CD4-positive, alpha-beta T cell (primary cell): ENCODE measurements at regions of chr16 and their contacts with region 1.

Region 1: DNA sequence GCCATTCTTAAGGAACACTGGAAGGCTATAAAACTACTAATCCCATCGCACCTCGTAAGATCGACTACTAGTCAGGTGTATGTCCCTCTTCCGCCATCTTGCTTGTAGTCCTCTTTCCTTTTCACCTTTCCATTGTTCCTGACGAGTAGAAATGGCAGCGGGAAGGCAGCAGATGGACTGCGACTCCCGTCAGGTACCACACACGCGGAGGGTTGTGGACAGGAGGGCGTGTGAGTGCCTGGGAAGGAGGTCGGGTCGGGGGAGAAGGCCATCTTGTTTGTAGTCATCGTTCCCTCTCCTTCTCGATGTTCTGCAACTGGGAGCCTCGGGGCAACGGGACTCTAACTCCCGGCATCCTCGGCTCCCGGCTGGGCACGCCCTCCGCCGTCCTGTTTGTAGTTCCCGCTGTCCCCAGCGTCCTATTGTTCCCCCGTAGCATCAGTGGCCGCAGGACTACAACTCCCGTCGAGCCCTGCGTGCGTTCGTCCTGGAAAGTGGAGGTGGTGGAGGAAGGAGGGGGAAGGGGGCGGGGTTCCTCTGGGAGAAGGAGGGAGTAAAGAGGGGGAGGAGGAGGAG is 324 bp upstream of the FBXL19 start:
- DNase-seq: peak; percentile 87 to 99 (median 93)
- ATAC-seq: peak; percentile 66
- H3K4me3 ChIP-seq: peak overlapping the region; percentile 93
- H3K4me3 Mint-ChIP-seq: peak overlapping the region; percentile 99
- H3K27ac ChIP-seq: peak overlapping the region; percentile 85 to 98
- H3K27ac Mint-ChIP-seq: peak overlapping the region; percentile 92
- H3K4me1 ChIP-seq: peaks cover 27% of the 10 kb centered on the region
- H3K4me1 Mint-ChIP-seq: peaks cover 19% of the 10 kb centered on the region
- H3K27me3 ChIP-seq: no peaks in the 10 kb centered on the region
- H3K27me3 Mint-ChIP-seq: no peaks in the 10 kb centered on the region
- CTCF ChIP-seq: no peak

Region 2: GRCh38 chr16:30650369-30651123 is 272.5 kb before region 1 on chr16 and contains the start of gene PRR14:
- CTCF ChIA-PET with region 1: no interaction called
- POLR2A ChIA-PET with region 1: no interaction called
- intact Hi-C with region 1: loop called in 1 of 2 experiments (anchors 2 kb)
- DNase-seq: peak; percentile 96 to 99 (median 98)
- ATAC-seq: peak; percentile 89
- H3K4me3 ChIP-seq: peak within 1 kb of the TSS; percentile 86
- H3K4me3 Mint-ChIP-seq: peak within 1 kb of the TSS; percentile 99
- H3K27ac ChIP-seq: peak within 1 kb of the TSS; percentile 84 to 96
- H3K27ac Mint-ChIP-seq: peak within 1 kb of the TSS; percentile 95
- H3K4me1 ChIP-seq: peaks cover 30% of the 10 kb centered on the region
- H3K4me1 Mint-ChIP-seq: peaks cover 22% of the 10 kb centered on the region
- H3K27me3 ChIP-seq: no peaks in the 10 kb centered on the region
- H3K27me3 Mint-ChIP-seq: no peaks in the 10 kb centered on the region
- CTCF ChIP-seq: no peak
- total RNA-seq, gene PRR14: 50.2 to 51.7 TPM

Region 3: DNA sequence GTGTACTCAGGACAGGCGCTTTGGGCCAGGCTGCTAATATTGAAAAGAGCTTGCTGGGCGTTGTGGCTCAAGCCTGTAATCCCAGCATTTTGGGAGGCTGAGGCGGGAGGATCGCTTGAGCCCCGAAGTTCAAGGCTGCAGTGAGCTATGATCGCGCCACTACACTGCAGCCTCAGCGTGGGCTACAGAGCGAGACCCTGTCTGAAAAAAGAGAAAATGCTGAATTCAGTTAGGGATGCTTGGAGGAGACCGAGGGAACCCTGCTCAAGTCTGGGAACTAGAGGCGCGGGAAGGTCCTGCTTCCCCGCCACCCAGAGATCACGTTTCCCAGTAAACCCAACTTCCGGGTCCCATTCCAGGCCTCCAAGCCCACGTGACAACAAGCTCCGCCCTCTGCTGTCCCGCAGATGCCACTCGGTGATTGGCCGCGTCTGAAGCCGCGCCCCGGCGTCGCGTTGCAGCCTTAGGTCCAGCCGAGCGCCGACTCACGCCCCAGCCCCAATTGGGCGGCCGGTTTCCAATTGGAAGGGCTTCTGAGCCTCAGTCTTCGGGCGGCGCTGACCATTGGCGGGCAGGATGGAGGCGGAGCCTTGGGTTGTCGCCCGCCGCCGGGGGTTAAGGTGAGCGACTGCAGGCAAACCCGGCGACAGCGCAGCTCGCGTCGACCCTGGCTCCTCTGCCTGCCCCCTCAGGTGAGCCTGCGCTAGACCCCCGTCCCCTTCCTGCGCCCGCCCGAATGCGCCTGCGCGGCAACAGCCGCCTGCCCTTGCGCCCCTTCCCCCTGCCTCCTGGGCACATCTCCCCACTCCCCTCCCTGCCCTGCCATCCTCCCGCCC is 175.0 kb before region 1 on chr16 and contains the start of gene PHKG2:
- CTCF ChIA-PET with region 1: no interaction called
- POLR2A ChIA-PET with region 1: no interaction called
- intact Hi-C with region 1: loop called in 1 of 2 experiments (anchors 5 kb)
- DNase-seq: peak; percentile 88 to 99 (median 94)
- ATAC-seq: peak; percentile 94
- H3K4me3 ChIP-seq: peak within 1 kb of the TSS; percentile 72
- H3K4me3 Mint-ChIP-seq: peak within 1 kb of the TSS; percentile 87
- H3K27ac ChIP-seq: peak within 1 kb of the TSS; percentile 8 to 68
- H3K27ac Mint-ChIP-seq: peak within 1 kb of the TSS; percentile 68
- H3K4me1 ChIP-seq: peaks cover 19% of the 10 kb centered on the region
- H3K4me1 Mint-ChIP-seq: peaks cover 30% of the 10 kb centered on the region
- H3K27me3 ChIP-seq: no peaks in the 10 kb centered on the region
- H3K27me3 Mint-ChIP-seq: no peaks in the 10 kb centered on the region
- CTCF ChIP-seq: no peak
- total RNA-seq, gene PHKG2: 24.8 to 25.2 TPM

Region 4: GRCh38 chr16:30874821-30875717 is 48.0 kb before region 1 on chr16:
- CTCF ChIA-PET with region 1: no interaction called
- POLR2A ChIA-PET with region 1: interaction called, 7 read pairs
- intact Hi-C with region 1: loop called in 1 of 2 experiments (anchors 1 kb)
- DNase-seq: peak; percentile 73 to 94 (median 88)
- ATAC-seq: peak; percentile 80
- H3K4me3 ChIP-seq: peak overlapping the region; percentile 98
- H3K4me3 Mint-ChIP-seq: peak overlapping the region; percentile 96
- H3K27ac ChIP-seq: peak overlapping the region; percentile 88 to 93
- H3K27ac Mint-ChIP-seq: peak overlapping the region; percentile 98
- H3K4me1 ChIP-seq: peaks cover 37% of the 10 kb centered on the region
- H3K4me1 Mint-ChIP-seq: peaks cover 30% of the 10 kb centered on the region
- H3K27me3 ChIP-seq: no peaks in the 10 kb centered on the region
- H3K27me3 Mint-ChIP-seq: no peaks in the 10 kb centered on the region
- CTCF ChIP-seq: no peak

Region 5: DNA sequence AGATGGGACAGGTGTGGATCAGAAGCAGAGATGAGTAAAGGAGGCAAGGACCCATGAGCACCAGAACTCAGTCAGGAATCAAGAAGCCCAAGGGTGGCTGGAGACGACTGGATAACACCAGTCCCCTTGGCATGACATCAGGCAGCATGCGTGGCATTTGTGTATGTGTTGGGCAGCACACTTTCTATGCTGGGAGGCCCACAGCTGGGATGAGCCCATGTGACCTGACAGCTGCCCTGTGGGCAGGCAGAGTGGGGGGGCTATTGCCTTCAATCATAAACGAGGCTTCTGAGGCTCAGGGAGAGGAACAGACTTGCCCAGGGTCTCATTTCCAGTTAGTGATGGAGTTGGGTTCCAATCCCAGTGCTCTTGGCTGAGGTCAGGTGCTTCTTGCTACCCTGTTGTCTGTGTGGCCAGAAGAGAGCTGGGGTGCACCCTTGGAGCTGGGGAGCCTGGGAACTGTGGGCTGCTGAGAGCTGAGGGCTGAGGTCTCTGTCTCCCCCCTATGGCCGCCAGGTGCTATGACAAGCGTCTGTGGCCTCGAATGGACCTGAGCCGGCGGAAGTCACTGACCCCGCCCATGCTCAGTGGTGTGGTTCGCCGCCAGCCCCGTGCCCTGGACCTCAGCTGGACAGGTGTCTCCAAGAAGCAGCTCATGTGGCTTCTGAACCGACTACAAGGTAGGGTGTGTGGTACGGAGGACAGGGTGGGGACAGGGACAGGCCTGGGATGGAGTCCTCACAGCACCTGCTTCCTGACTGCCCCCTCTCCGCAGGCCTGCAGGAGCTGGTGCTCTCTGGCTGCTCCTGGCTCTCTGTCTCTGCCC is 18.8 kb after region 1 on chr16:
- CTCF ChIA-PET with region 1: interaction called, 10 read pairs
- POLR2A ChIA-PET with region 1: no interaction called
- intact Hi-C with region 1: no loop called
- DNase-seq: peak; percentile 34 to 85 (median 50)
- ATAC-seq: peak; percentile 95
- H3K4me3 ChIP-seq: no peak overlapping the region
- H3K4me3 Mint-ChIP-seq: no peak overlapping the region
- H3K27ac ChIP-seq: peak overlapping the region in 1 of 2 donors; percentile 52
- H3K27ac Mint-ChIP-seq: no peak overlapping the region
- H3K4me1 ChIP-seq: peaks cover 13% of the 10 kb centered on the region
- H3K4me1 Mint-ChIP-seq: peaks cover 19% of the 10 kb centered on the region
- H3K27me3 ChIP-seq: no peaks in the 10 kb centered on the region
- H3K27me3 Mint-ChIP-seq: no peaks in the 10 kb centered on the region
- CTCF ChIP-seq: peak; percentile 87

Region 6: DNA sequence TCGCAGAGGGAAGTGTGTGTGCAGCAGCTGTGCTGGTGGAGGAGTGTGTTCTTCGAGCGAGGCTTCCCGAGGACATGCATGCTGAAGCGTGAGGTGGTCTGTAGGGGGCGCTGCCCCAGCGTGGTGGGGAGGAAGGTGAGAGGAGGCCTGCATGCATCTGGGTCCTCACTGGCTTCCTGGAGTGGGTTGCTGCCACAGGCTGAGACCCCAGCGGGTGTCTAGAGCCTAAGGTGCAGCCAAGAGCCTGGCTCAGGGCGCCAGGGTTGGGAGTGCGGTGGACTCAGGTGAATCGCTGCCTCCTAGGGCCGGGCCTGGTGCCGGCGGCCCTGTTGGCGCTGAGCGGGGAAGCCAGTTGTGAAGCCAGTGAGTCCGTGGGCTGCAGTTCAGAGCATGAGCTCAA is 54.5 kb after region 1 on chr16:
- CTCF ChIA-PET with region 1: no interaction called
- POLR2A ChIA-PET with region 1: no interaction called
- intact Hi-C with region 1: no loop called
- DNase-seq: peak in 2 of 14 experiments; percentile 40 to 54
- ATAC-seq: peak; percentile 55
- H3K4me3 ChIP-seq: no peak overlapping the region
- H3K4me3 Mint-ChIP-seq: no peak overlapping the region
- H3K27ac ChIP-seq: no peak overlapping the region
- H3K27ac Mint-ChIP-seq: no peak overlapping the region
- H3K4me1 ChIP-seq: no peaks in the 10 kb centered on the region
- H3K4me1 Mint-ChIP-seq: no peaks in the 10 kb centered on the region
- H3K27me3 ChIP-seq: no peaks in the 10 kb centered on the region
- H3K27me3 Mint-ChIP-seq: no peaks in the 10 kb centered on the region
- CTCF ChIP-seq: no peak

Region 7: GRCh38 chr16:31073968-31074813 is 151.1 kb after region 1 on chr16 and contains the starts of genes ZNF646 and ZNF668:
- CTCF ChIA-PET with region 1: no interaction called
- POLR2A ChIA-PET with region 1: interaction called, 3 read pairs
- intact Hi-C with region 1: loop called (anchors 1 to 10 kb)
- DNase-seq: peak; percentile 94 to 100 (median 97)
- ATAC-seq: peak; percentile 81
- H3K4me3 ChIP-seq: peak within 1 kb of the TSS; percentile 96
- H3K4me3 Mint-ChIP-seq: peak within 1 kb of the TSS; percentile 98
- H3K27ac ChIP-seq: peak within 1 kb of the TSS; percentile 93 to 95
- H3K27ac Mint-ChIP-seq: peak within 1 kb of the TSS; percentile 92
- H3K4me1 ChIP-seq: peaks cover 35% of the 10 kb centered on the region
- H3K4me1 Mint-ChIP-seq: peaks cover 34% of the 10 kb centered on the region
- H3K27me3 ChIP-seq: no peaks in the 10 kb centered on the region
- H3K27me3 Mint-ChIP-seq: no peaks in the 10 kb centered on the region
- CTCF ChIP-seq: no peak
- total RNA-seq, gene ZNF646: 14.3 to 16.6 TPM
- total RNA-seq, gene ZNF668: 4.5 to 6.0 TPM